H1 (cell line): ENCODE measurements at regions of chr1 and their contacts with region 1.

Region 1: GRCh38 chr1:201696217-201696761 is 132.7 kb upstream of the IPO9 start:
- DNase-seq: no peak
- H3K4me3 ChIP-seq: no peak overlapping the region
- H3K27ac ChIP-seq: no peak overlapping the region
- H3K4me1 ChIP-seq: peaks cover 16 to 24% (median 19%) of the 10 kb centered on the region in 4 experiments
- H3K27me3 ChIP-seq: no peaks in the 10 kb centered on the region
- CTCF ChIP-seq: no peak
- EP300 ChIP-seq: no peak
- POLR2A ChIP-seq: no peak
- RAD21 ChIP-seq: no peak

Region 2: DNA sequence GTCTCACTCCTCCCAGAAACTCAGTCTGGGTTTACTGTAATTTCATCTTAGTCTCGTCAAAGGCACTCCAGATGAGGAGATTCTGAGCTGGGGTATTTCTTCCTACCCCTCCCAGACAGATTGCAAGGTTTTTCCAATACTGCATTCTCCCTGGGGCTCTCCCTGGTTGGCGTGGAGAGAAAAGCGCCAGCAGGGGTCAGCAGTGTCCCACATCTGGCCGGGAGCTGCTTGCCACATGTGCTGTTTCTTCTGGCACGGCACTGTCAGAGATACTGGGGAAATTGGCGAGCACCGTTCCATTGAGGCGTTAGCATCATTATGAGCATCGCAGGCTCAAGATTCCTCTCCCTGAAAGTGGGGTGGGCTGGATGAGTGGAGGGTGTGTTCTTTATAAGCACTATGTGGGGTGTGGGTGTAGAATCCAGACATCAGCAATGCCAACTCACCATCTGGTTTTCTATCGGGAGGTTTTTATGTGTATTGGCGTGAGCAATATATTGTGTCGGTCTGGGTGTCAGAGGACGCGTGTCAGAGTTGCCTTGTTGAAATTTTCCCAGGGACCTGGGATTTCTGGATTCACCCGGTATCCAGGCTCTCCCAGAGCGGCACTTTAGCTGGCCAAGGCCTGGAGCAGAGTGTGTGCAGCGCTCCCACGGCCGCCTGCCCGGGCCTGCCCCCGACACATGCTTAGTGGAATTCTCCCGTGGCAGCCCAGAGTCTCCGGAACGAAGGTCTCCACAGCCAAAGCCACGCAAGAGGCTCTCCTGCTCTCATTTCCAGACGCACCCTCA is 165.4 kb before region 1 on chr1:
- CTCF ChIA-PET with region 1: interaction called, 10 read pairs
- POLR2A ChIA-PET with region 1: no interaction called
- DNase-seq: peak in 1 of 2 experiments; percentile 90
- H3K4me3 ChIP-seq: no peak overlapping the region
- H3K27ac ChIP-seq: no peak overlapping the region
- H3K4me1 ChIP-seq: peaks cover 0 to 5% (median 3%) of the 10 kb centered on the region in 4 experiments; a peak in 3 of 7 replicates
- H3K27me3 ChIP-seq: no peaks in the 10 kb centered on the region
- CTCF ChIP-seq: peak; percentile 88 to 92 (median 91)
- EP300 ChIP-seq: no peak
- POLR2A ChIP-seq: no peak
- RAD21 ChIP-seq: peak; percentile 96

Region 3: DNA sequence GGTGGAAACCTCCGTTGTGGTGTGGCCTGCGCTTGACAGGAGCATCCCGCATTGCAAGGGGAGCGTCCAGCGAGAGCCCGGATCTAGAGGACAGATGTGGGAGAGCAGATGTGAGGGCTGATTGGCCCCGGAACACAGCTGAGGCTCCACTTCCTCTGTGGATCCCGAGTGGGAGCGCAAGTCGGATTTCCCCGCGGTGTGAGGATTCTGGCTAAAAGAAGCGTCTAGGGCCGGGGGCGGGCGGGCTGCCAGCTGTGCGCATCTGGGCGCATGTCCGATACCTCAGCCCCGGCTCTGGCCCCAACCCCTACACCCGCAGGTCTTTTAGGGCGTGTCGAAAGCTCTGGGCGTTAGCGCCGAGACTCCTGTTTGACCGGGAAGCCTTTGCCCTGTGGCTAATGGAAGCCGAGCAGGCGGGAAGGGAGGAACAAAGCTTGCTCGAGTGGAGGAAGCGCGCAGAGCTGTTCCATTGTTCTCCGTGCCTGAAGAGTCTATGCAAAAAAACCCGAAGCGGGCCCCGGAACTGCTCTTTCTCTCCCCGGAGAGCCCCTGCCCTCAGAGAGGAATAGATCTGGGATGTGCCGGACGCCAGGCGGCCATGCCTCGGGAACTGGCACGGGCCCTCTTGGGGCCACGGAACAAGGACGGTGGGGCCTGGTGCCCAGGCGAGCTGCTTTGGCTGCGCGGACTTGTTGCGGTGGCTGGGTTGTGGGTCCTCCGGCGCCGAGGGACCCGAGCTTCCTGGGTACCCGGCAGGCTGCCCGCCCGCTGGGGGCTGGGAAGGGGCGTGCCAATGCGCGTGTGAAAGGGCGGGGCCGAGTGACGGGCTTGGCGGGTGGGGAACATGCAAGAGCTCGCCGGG is 46.3 kb before region 1 on chr1:
- CTCF ChIA-PET with region 1: interaction called, 14 read pairs
- POLR2A ChIA-PET with region 1: interaction called, 3 read pairs
- DNase-seq: peak; percentile 47 to 90
- H3K4me3 ChIP-seq: peak overlapping the region; percentile 67 to 83 (median 70)
- H3K27ac ChIP-seq: no peak overlapping the region
- H3K4me1 ChIP-seq: peaks cover 13 to 33% (median 25%) of the 10 kb centered on the region in 4 experiments
- H3K27me3 ChIP-seq: peaks cover 0 to 22% (median 19%) of the 10 kb centered on the region in 4 experiments; a peak in 5 of 7 replicates
- CTCF ChIP-seq: no peak
- EP300 ChIP-seq: no peak
- POLR2A ChIP-seq: 0 out of 3 replicates have a peak, but pooled peaks of 1 of the 2 experiments have one; percentile 29
- RAD21 ChIP-seq: no peak

Region 4: DNA sequence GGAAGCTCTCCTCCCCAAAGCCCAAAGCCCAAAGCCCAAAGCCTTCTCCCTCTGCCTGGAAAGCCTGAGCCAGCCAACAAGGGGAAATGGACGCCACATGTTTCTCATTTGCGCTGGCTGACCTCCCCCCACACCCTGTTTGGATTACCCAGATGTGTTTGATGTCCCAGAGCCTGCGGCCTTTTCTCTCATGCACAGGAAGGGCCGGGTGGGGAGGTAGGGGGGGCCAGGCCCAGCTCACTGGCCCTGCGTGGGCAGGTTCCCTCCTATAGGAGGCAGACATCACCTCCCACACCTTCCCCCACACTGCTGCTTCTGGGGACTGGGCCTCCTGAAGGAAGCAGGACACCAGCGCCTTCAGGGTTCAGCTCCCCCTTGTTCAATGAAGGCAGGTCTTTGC is 41.0 kb before region 1 on chr1:
- CTCF ChIA-PET with region 1: interaction called, 14 read pairs
- POLR2A ChIA-PET with region 1: no interaction called
- DNase-seq: no peak
- H3K4me3 ChIP-seq: no peak overlapping the region
- H3K27ac ChIP-seq: no peak overlapping the region
- H3K4me1 ChIP-seq: peaks cover 9 to 27% (median 19%) of the 10 kb centered on the region in 4 experiments
- H3K27me3 ChIP-seq: peaks cover 0 to 5% (median 0%) of the 10 kb centered on the region in 4 experiments; a peak in 1 of 7 replicates
- CTCF ChIP-seq: peak; percentile 46 to 49 (median 48)
- EP300 ChIP-seq: no peak
- POLR2A ChIP-seq: no peak
- RAD21 ChIP-seq: peak; percentile 10 to 43; a peak in 3 of 4 replicates

Region 5: DNA sequence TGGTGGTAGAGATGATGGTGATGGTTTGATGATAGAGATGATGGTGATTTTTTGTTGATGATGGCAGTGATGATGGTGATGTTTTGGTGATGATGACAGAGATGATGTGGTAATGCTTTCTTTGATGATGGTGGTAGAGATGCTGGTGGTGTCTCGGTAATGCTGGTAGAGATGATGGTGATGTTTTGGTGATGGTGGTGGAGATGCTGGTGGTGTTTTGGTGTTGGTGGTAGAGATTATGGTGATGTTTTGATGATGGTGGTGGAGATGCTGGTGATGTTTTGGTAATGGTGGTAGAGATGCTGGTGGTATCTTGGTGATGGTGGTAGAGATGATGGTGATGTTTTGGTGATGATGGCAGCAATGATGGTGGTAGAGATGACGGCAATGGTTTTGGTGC is 25.7 kb before region 1 on chr1:
- CTCF ChIA-PET with region 1: no interaction called
- POLR2A ChIA-PET with region 1: no interaction called
- DNase-seq: no peak
- H3K4me3 ChIP-seq: no peak overlapping the region
- H3K27ac ChIP-seq: no peak overlapping the region
- H3K4me1 ChIP-seq: peaks cover 0 to 5% (median 2%) of the 10 kb centered on the region in 4 experiments; a peak in 2 of 7 replicates
- H3K27me3 ChIP-seq: no peaks in the 10 kb centered on the region
- CTCF ChIP-seq: no peak
- EP300 ChIP-seq: no peak
- POLR2A ChIP-seq: no peak
- RAD21 ChIP-seq: no peak

Region 6: DNA sequence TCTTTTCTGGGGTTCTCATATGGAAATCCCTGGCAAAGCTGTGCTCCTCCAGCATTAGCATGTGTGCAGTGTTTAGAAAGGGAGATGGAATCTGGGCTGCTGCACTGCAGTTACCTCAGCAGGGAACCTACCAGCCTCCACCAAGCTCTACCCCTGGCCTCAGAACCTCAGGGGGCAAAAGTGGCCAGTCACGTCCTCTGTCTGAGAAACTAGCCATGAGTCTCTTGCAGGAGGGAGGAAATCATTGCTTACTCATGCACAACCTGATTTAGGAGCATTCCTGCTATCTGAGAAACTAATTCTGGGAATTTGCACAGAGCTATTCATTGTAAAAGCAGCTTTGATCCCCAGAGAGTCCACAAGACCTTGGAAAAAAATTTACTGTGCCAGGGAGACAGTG is 52.0 kb after region 1 on chr1:
- CTCF ChIA-PET with region 1: no interaction called
- POLR2A ChIA-PET with region 1: no interaction called
- DNase-seq: no peak
- H3K4me3 ChIP-seq: no peak overlapping the region
- H3K27ac ChIP-seq: no peak overlapping the region
- H3K4me1 ChIP-seq: peaks cover 5 to 21% (median 18%) of the 10 kb centered on the region in 4 experiments; a peak in 6 of 7 replicates
- H3K27me3 ChIP-seq: no peaks in the 10 kb centered on the region
- CTCF ChIP-seq: no peak
- EP300 ChIP-seq: no peak
- POLR2A ChIP-seq: no peak
- RAD21 ChIP-seq: no peak